Pancreas (tissue), 10 donors: ENCODE measurements at regions of chr3 and their contacts with region 1.

Region 1: DNA sequence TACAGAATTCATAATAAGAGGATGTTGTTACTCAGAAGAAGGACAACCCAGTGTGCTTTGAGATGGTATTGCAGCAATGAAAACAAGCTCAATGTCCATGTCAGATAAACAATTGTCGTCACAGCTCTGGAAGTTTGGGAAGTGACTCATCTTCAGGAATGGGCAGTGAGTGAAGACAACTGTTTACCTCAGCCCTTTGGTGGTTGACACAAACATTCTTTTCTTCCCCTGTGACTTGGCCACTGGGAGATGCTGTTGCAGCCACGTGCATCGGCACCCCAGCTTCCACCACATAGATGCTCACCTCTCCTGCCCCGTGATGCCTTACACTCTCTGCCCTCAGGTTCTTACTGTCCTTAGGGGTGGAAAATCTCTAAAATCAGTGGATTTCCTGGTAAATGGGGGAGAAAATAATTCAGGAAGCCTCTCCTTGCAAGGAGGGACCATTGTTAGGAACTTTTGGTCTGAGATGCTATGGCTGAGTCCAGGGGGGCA is 114.1 kb upstream of the GALNT15 start:
- DNase-seq: no peak
- ATAC-seq: peak in 3 of 4 donors; percentile 59 to 63 (median 61)
- H3K4me3 ChIP-seq: no peak overlapping the region
- H3K27ac ChIP-seq: peak overlapping the region in 2 of 4 donors; percentile 38 to 57
- H3K4me1 ChIP-seq: no peaks in the 10 kb centered on the region
- H3K27me3 ChIP-seq: no peaks in the 10 kb centered on the region
- CTCF ChIP-seq: no peak

Region 2: GRCh38 chr3:16124636-16125035 is 64.2 kb after region 1 on chr3:
- intact Hi-C with region 1: loop called in 1 of 3 experiments (anchors 10 kb)
- DNase-seq: no peak
- ATAC-seq: peak in 2 of 4 donors; percentile 36 to 61
- H3K4me3 ChIP-seq: no peak overlapping the region
- H3K27ac ChIP-seq: no peak overlapping the region
- H3K4me1 ChIP-seq: no peaks in the 10 kb centered on the region
- H3K27me3 ChIP-seq: no peaks in the 10 kb centered on the region
- CTCF ChIP-seq: no peak

Region 3: GRCh38 chr3:16177962-16178627 is 117.7 kb after region 1 on chr3:
- intact Hi-C with region 1: loop called in 1 of 3 experiments (anchors 10 kb)
- DNase-seq: peak; percentile 48 to 92 (median 78)
- ATAC-seq: peak; percentile 89 to 94 (median 90)
- H3K4me3 ChIP-seq: no peak overlapping the region
- H3K27ac ChIP-seq: no peak overlapping the region
- H3K4me1 ChIP-seq: no peaks in the 10 kb centered on the region
- H3K27me3 ChIP-seq: no peaks in the 10 kb centered on the region
- CTCF ChIP-seq: peak; percentile 86 to 93 (median 89)

Region 4: DNA sequence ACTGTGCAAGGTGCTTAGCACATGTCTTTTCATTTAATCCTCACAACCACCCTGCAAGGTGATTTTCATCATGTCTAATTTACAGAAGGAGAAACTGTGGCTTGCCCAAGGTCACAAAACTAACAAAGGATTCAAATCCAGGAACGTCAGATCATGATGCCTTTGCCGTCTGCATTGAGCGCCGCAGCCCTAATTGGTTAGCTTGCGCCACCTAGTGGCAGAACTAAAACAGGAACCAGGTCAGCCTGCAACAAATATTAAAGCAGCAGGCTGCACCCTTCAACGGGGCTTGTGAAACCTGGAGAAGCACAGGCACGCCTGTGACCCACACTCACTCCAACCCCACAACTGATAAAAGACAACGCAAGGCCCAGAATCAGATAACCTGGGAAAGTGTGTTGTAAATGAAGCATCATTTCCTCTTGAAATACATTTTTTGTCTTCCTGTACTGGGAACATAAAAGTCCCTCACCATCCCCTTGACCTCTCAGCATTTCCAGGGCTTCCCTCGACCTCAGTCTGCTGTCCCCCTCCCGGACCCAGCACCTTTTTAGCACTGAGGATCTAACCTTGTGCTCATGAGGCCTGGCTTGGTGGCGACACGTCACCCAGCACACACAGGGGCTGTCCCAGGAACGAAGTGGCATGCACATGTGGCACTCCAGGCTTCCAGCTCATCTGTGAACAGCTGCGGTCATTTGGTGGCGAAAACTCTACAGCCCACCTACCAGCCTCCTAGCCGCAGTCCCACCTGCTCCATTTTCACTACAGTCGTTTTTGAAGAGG is 187.1 kb after region 1 on chr3:
- intact Hi-C with region 1: loop called in 1 of 3 experiments (anchors 10 kb)
- DNase-seq: peak; percentile 58 to 82 (median 74)
- ATAC-seq: peak; percentile 72 to 89 (median 86)
- H3K4me3 ChIP-seq: no peak overlapping the region
- H3K27ac ChIP-seq: no peak overlapping the region
- H3K4me1 ChIP-seq: peaks cover 5 to 10% (median 8%) of the 10 kb centered on the region in 3 donors
- H3K27me3 ChIP-seq: no peaks in the 10 kb centered on the region
- CTCF ChIP-seq: peak; percentile 78 to 96 (median 88)